Activated B cell treated with CpG ODN at 0.5 μM for 24 hours (primary cell): ENCODE measurements at regions of chr2 and their contacts with region 1.

Region 1: GRCh38 chr2:105769504-105769903 is 24.8 kb downstream of the NCK2 start:
- DNase-seq: no peak
- ATAC-seq: peak; percentile 47
- H3K4me3 Mint-ChIP-seq: peak overlapping the region; percentile 8
- H3K27ac Mint-ChIP-seq: peak overlapping the region; percentile 70
- H3K4me1 Mint-ChIP-seq: peaks cover 69% of the 10 kb centered on the region
- H3K27me3 Mint-ChIP-seq: no peaks in the 10 kb centered on the region
- CTCF ChIP-seq: no peak

Region 2: GRCh38 chr2:105754011-105754410 is 15.5 kb before region 1 on chr2:
- CTCF ChIA-PET with region 1: no interaction called
- POLR2A ChIA-PET with region 1: interaction called, 13 read pairs
- intact Hi-C with region 1: loop called (anchors 2 kb)
- DNase-seq: no peak
- ATAC-seq: peak; percentile 22
- H3K4me3 Mint-ChIP-seq: peak overlapping the region; percentile 52
- H3K27ac Mint-ChIP-seq: peak overlapping the region; percentile 61
- H3K4me1 Mint-ChIP-seq: peaks cover 92% of the 10 kb centered on the region
- H3K27me3 Mint-ChIP-seq: no peaks in the 10 kb centered on the region
- CTCF ChIP-seq: no peak